ENCODE measurements at regions of chr9 and their contacts with region 1.

Region 1: GRCh38 chr9:36008774-36009300 is 27.9 kb upstream of the RECK start:
- DNase-seq: peak; percentile 79 to 85
- ATAC-seq: peak; percentile 90 to 99
- H3K4me3 ChIP-seq: no peak overlapping the region
- H3K27ac ChIP-seq: no peak overlapping the region
- H3K4me1 ChIP-seq: no peaks in the 10 kb centered on the region
- CTCF ChIP-seq: peak; percentile 100
- EP300 ChIP-seq: no peak
- POLR2A ChIP-seq: no peak
- RAD21 ChIP-seq: peak; percentile 85

Region 2: GRCh38 chr9:35871497-35871896 is 137.3 kb before region 1 on chr9:
- CTCF ChIA-PET with region 1: no interaction called
- POLR2A ChIA-PET with region 1: no interaction called
- DNase-seq: no peak
- ATAC-seq: 0 out of 6 replicates have a peak, but pooled peaks of 1 of the 2 experiments have one; percentile 35
- H3K4me3 ChIP-seq: no peak overlapping the region
- H3K27ac ChIP-seq: no peak overlapping the region
- H3K4me1 ChIP-seq: peaks cover 2% of the 10 kb centered on the region; the same call in 1 of the 3 replicates
- CTCF ChIP-seq: no peak
- EP300 ChIP-seq: no peak
- POLR2A ChIP-seq: no peak
- RAD21 ChIP-seq: no peak

Region 3: GRCh38 chr9:35954942-35955546 is 53.8 kb before region 1 on chr9:
- CTCF ChIA-PET with region 1: interaction called, 75 read pairs
- POLR2A ChIA-PET with region 1: no interaction called
- DNase-seq: peak; percentile 42 to 81
- ATAC-seq: peak; percentile 87 to 93
- H3K4me3 ChIP-seq: no peak overlapping the region
- H3K27ac ChIP-seq: no peak overlapping the region
- H3K4me1 ChIP-seq: peaks cover 8% of the 10 kb centered on the region; the same call in 1 of the 3 replicates
- CTCF ChIP-seq: peak; percentile 91
- EP300 ChIP-seq: no peak
- POLR2A ChIP-seq: no peak
- RAD21 ChIP-seq: peak; percentile 77 to 87

Region 4: GRCh38 chr9:35996358-35996975 is 12.4 kb before region 1 on chr9:
- CTCF ChIA-PET with region 1: interaction called, 29 read pairs
- POLR2A ChIA-PET with region 1: no interaction called
- DNase-seq: peak in 1 of 2 experiments; percentile 10
- ATAC-seq: peak; percentile 64 to 71; a peak in 4 of 6 replicates
- H3K4me3 ChIP-seq: no peak overlapping the region
- H3K27ac ChIP-seq: no peak overlapping the region
- H3K4me1 ChIP-seq: no peaks in the 10 kb centered on the region
- CTCF ChIP-seq: no peak
- EP300 ChIP-seq: no peak
- POLR2A ChIP-seq: no peak
- RAD21 ChIP-seq: no peak

Region 5: DNA sequence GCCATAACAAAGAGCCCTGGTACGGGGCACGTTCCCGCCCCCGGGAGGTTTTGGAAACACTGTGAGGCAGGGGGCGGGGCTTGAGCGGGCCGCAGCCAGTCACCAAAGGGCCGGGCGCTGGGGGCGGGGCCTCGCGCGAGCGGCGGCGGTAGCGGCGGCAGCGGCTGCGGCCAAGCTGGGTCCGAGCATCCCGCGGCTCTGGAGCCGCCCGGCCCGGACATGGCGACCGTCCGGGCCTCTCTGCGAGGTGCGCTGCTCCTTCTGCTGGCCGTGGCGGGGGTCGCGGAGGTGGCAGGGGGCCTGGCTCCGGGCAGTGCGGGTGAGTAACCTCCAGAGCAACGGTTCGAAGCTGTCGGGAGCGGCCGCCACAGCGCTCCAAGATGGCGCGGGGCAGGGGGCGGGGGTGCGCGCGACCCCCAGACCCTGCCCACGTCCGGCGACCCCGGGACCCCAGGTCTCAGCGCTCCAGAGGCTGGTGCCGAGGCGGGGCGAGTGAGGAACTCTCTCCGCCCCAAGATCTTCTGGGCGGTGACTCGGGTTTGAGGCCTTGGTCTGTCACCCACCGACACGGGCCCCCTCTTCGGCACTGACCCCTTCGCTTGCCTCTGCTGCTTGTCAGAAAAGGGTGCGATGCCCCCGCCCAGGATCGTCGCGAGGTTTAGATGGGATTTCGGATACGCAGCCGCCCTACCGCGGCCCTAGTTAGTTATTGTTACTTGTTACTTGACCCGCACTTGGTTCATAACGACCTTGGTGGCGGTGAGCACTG is 28.1 kb after region 1 on chr9 and contains the start of gene RECK:
- CTCF ChIA-PET with region 1: interaction called, 11 read pairs
- POLR2A ChIA-PET with region 1: no interaction called
- DNase-seq: peak; percentile 62 to 85
- ATAC-seq: peak; percentile 93 to 94
- H3K4me3 ChIP-seq: peak within 1 kb of the TSS; percentile 79
- H3K27ac ChIP-seq: peak within 1 kb of the TSS; percentile 74 to 93
- H3K4me1 ChIP-seq: peaks cover 27% of the 10 kb centered on the region
- CTCF ChIP-seq: no peak
- EP300 ChIP-seq: no peak
- POLR2A ChIP-seq: peak; percentile 62
- RAD21 ChIP-seq: no peak
- polyA plus RNA-seq, gene RECK: 8.3 and 8.7 TPM in 2 replicates

Region 6: GRCh38 chr9:36110434-36110833 is 101.6 kb after region 1 on chr9:
- CTCF ChIA-PET with region 1: interaction called, 79 read pairs
- POLR2A ChIA-PET with region 1: no interaction called
- DNase-seq: peak in 1 of 2 experiments; percentile 15
- ATAC-seq: no peak
- H3K4me3 ChIP-seq: no peak overlapping the region
- H3K27ac ChIP-seq: no peak overlapping the region
- H3K4me1 ChIP-seq: no peaks in the 10 kb centered on the region
- CTCF ChIP-seq: peak; percentile 34; the same call in 1 of the 3 replicates
- EP300 ChIP-seq: no peak
- POLR2A ChIP-seq: no peak
- RAD21 ChIP-seq: peak; percentile 35 to 52; a peak in 4 of 5 replicates

Measured in A549 (cell line).